ENCODE measurements at regions of chr4 and their contacts with region 1.

Region 1: DNA sequence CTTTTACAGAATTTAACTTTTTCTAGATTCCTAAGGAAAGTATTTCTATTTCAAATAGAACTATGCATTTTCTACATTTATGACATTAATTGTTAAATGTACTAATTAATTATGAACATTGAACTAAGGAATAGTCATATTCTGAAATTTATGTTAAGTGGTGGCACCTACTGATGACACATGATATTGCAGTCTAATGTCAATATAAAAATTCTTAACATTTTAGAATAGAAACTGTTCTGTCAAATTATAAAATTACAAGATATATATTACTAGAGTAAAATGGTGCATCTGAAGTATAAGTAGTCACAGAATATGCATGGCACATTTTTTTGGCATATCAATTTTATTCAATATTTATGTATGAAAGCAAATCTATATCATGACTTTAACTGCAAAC is 40.2 kb upstream of the NDNF start:
- DNase-seq: no peak
- H3K4me3 Mint-ChIP-seq: no peak overlapping the region
- H3K27ac Mint-ChIP-seq: no peak overlapping the region
- H3K4me1 Mint-ChIP-seq: peaks cover 19% of the 10 kb centered on the region
- H3K27me3 Mint-ChIP-seq: peaks cover 32% of the 10 kb centered on the region

Region 2: DNA sequence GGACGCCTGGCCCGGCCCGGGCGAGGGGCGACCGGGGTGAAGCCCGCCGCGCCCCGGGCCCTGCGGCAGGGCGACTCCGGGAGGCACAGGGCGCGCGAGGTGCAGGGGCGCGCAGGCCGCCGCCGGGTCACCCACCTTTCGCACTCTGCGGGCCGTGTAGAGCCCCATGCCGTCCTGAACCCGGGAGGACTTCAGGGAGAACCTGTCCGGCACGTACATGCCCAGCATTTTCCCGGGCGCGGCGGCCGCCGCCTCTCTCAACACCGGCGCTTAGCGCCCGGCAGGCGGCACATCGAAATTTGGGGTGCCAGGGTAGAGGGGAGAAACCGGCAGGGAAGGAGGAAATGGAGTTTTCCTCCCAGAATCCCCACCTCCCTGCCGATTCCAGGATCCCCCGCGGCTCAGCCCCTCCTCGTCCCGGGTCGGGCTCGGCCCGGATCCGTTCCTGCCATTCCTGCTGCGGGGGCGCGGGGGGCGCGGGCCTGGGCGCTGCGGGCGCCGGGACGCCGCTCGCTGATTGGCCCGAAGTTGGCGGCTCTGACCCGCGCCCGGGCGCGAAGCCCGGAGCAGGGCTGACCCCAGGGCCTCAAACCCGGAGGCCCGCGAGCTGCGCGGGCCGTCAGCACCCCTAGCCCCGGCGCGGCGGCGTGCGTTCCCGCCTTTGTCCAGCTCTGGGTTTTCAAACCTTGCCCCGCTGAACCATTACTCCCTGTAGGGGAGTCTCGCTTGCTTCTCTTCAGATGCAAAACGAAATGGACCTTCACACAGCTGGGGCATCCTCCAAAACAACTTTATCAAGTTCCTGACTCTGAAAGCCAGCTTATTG is 189.9 kb before region 1 on chr4 and contains the start of gene PRDM5:
- intact Hi-C with region 1: loop called (anchors 2 kb)
- DNase-seq: no peak
- H3K4me3 Mint-ChIP-seq: peak within 1 kb of the TSS; percentile 71
- H3K27ac Mint-ChIP-seq: peak within 1 kb of the TSS; percentile 53
- H3K4me1 Mint-ChIP-seq: peaks cover 11% of the 10 kb centered on the region
- H3K27me3 Mint-ChIP-seq: peaks cover 61% of the 10 kb centered on the region
- total RNA-seq, gene PRDM5: 0.18 TPM in 1 of 2 replicates, not detected in the other

Region 3: DNA sequence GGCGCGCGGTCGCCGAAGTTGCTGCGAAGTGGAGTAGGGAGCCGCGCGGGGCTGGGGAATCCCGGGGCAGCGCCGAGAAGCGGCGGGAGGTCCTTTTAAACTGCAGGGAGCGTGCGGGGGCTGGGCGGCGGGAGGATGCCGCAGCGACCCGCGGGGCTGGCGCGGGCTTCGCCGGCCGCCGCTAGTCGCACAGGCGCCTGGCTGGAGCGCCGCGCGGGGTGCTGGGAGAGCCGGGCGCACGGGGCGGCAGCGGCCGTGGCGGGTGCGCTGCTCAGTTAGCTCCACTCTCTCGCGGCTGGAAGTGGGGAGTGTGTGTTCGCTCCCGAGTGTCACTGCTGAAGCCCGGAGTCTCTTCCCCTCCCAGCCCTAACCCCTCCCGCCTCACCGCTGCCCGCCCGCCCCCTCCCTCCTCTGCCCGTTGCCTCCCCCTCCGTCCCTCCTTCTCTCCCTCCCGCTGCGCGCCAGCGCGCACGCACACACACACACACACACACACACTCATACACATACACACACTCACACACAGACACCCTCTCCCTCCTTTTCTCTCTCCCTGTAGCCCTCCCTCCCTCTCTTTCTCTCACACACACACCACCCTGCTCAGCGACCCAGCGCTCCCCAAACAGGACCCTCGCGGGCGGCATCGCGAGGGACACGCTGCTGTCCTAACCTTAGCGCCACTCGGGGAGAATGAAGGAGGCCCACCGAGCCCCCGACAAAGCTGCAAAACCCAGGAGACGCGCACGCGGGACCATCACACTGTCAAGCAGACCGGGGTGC is 40.1 kb before region 1 on chr4 and contains the start of gene NDNF:
- intact Hi-C with region 1: loop called (anchors 5 kb)
- DNase-seq: peak; percentile 23
- H3K4me3 Mint-ChIP-seq: peak within 1 kb of the TSS; percentile 78
- H3K27ac Mint-ChIP-seq: no peak within 1 kb of the TSS
- H3K4me1 Mint-ChIP-seq: peaks cover 18% of the 10 kb centered on the region
- H3K27me3 Mint-ChIP-seq: peaks cover 73% of the 10 kb centered on the region
- total RNA-seq, gene NDNF: 0.55 and 0.78 TPM in 2 replicates

Region 4: DNA sequence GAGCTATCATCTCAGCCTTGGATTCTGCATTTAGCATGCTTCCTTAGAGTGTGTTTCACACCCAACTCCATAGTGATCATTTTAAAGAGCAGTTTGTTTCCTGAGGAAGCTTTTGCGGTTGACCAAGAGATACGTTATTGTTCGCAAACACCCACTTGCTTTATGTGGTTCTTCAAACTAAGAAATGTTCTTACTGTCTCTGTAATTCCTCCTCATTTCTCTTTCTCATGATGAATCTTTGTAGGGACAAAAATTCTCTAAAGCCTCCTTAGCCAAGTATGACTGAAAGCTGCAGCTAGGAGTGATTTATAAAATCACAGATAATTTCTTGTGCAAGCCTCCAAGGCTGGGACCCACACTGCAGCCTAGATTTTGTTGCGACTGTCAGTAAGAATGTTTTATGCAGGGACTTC is 41.6 kb after region 1 on chr4:
- intact Hi-C with region 1: loop called (anchors 1 kb)
- DNase-seq: peak; percentile 21
- H3K4me3 Mint-ChIP-seq: peak overlapping the region; percentile 56
- H3K27ac Mint-ChIP-seq: peak overlapping the region; percentile 51
- H3K4me1 Mint-ChIP-seq: peaks cover 56% of the 10 kb centered on the region
- H3K27me3 Mint-ChIP-seq: peaks cover 22% of the 10 kb centered on the region

Region 5: DNA sequence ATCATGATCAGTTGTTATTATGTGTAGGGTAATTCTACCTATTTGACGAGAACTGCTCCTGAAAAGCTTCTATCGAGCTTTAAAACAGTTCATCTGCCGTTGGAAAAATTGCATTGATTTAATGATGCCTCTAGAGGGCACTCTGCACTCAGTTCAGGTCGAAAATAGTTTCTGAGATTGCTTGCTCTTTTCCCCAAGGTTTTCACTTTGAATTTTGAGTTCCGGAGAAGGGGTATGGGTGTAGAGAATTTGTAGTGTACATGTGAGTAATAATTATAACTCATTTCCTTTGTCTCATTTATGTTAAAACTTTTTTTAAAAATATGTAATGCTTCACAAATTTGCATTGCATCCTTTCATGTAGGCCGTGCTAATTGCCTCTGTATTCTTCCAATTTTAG is 80.0 kb after region 1 on chr4:
- intact Hi-C with region 1: loop called (anchors 2 kb)
- DNase-seq: no peak
- H3K4me3 Mint-ChIP-seq: peak overlapping the region; percentile 55
- H3K27ac Mint-ChIP-seq: no peak overlapping the region
- H3K4me1 Mint-ChIP-seq: peaks cover 52% of the 10 kb centered on the region
- H3K27me3 Mint-ChIP-seq: no peaks in the 10 kb centered on the region

Region 6: GRCh38 chr4:121307445-121308327 is 195.2 kb after region 1 on chr4:
- intact Hi-C with region 1: loop called (anchors 2 kb)
- DNase-seq: peak; percentile 31
- H3K4me3 Mint-ChIP-seq: no peak overlapping the region
- H3K27ac Mint-ChIP-seq: no peak overlapping the region
- H3K4me1 Mint-ChIP-seq: peaks cover 24% of the 10 kb centered on the region
- H3K27me3 Mint-ChIP-seq: peaks cover 20% of the 10 kb centered on the region